Heart left ventricle (tissue), 16 donors: ENCODE measurements at regions of chr10 and their contacts with region 1.

Region 1: DNA sequence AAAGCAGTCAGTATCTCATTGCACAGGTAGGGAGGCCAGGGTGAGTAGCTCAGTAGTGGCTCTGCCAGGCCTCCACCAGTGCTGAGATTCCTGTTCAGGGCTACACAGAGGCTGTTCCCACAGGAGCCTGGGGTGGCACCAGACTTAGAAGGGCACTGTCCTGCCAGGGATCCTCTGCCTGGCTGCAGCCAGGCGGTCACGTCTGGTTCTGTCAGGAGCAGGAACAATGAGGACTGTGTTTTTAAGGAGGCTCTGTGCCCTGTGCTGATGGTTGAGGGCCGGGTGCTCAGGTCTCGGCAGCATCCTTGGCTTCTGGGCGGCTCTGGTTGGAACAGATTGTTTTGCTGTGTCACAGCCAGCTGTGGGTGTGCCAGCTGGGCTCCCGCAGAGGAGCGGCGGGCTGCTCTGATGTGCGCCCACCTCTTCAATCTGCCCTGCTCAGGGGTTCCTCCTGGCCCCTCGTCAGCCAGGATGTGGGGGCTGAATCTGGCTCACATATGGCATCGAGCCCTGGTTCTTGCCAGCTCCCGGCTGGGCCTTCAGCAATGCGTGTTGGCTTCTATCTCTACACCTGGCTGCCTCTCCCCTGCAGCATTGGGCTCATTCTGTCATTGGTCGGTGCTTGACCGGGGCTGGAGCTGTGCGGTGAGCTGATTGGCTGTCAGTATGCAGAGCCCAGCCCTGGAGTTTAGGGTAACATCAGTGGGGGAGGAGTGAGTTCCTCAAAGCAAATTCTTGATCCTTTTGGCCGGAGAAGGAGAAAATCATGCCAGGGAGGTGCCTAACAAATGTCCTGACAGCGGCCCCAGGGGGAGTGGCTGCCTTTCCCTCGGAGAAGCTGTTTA is 41.2 kb downstream of the TACR2 start:
- DNase-seq: peak in 4 of 5 donors; percentile 33 to 64 (median 58)
- ATAC-seq: peak; percentile 72 to 85 (median 76)
- H3K4me3 ChIP-seq: peak overlapping the region in 1 of 12 donors; percentile 13
- H3K27ac ChIP-seq: peak overlapping the region in 10 of 12 donors; percentile 4 to 63 (median 38)
- H3K4me1 ChIP-seq: peaks cover 0 to 49% (median 33%) of the 10 kb centered on the region in 12 donors
- H3K27me3 ChIP-seq: no peaks in the 10 kb centered on the region
- CTCF ChIP-seq: peak in 1 of 12 donors; percentile 13
- POLR2A ChIP-seq: no peak

Region 2: GRCh38 chr10:69318106-69318866 is 57.2 kb before region 1 on chr10:
- intact Hi-C with region 1: loop called in 5 of 10 experiments (anchors 2 to 5 kb)
- DNase-seq: peak; percentile 94 to 96 (median 95)
- ATAC-seq: peak; percentile 93 to 97 (median 96)
- H3K4me3 ChIP-seq: peak overlapping the region; percentile 74 to 100 (median 94)
- H3K27ac ChIP-seq: peak overlapping the region; percentile 90 to 98 (median 95)
- H3K4me1 ChIP-seq: peaks cover 8 to 51% (median 33%) of the 10 kb centered on the region in 12 donors
- H3K27me3 ChIP-seq: no peaks in the 10 kb centered on the region
- CTCF ChIP-seq: peak in 2 of 12 donors; percentile 11 to 21
- POLR2A ChIP-seq: peak in 1 of 2 donors; percentile 90

Region 3: GRCh38 chr10:69327463-69328379 is 47.8 kb before region 1 on chr10:
- intact Hi-C with region 1: loop called in 1 of 10 experiments (anchors 5 kb)
- DNase-seq: peak; percentile 75 to 87 (median 81)
- ATAC-seq: peak; percentile 88 to 95 (median 90)
- H3K4me3 ChIP-seq: peak overlapping the region in 10 of 12 donors; percentile 15 to 51 (median 32)
- H3K27ac ChIP-seq: peak overlapping the region; percentile 77 to 95 (median 88)
- H3K4me1 ChIP-seq: peaks cover 13 to 99% (median 80%) of the 10 kb centered on the region in 12 donors
- H3K27me3 ChIP-seq: no peaks in the 10 kb centered on the region
- CTCF ChIP-seq: no peak
- POLR2A ChIP-seq: peak in 1 of 2 donors; percentile 57

Region 4: GRCh38 chr10:69337296-69338132 is 38.0 kb before region 1 on chr10:
- intact Hi-C with region 1: loop called in 1 of 10 experiments (anchors 5 kb)
- DNase-seq: peak in 4 of 5 donors; percentile 40 to 64 (median 56)
- ATAC-seq: peak; percentile 12 to 39 (median 32)
- H3K4me3 ChIP-seq: peak overlapping the region in 1 of 12 donors; percentile 12
- H3K27ac ChIP-seq: peak overlapping the region; percentile 16 to 89 (median 63)
- H3K4me1 ChIP-seq: peaks cover 41 to 98% (median 77%) of the 10 kb centered on the region in 12 donors
- H3K27me3 ChIP-seq: no peaks in the 10 kb centered on the region
- CTCF ChIP-seq: no peak
- POLR2A ChIP-seq: no peak